PC-3 (cell line): ENCODE measurements at regions of chr18 and their contacts with region 1.

Region 1: DNA sequence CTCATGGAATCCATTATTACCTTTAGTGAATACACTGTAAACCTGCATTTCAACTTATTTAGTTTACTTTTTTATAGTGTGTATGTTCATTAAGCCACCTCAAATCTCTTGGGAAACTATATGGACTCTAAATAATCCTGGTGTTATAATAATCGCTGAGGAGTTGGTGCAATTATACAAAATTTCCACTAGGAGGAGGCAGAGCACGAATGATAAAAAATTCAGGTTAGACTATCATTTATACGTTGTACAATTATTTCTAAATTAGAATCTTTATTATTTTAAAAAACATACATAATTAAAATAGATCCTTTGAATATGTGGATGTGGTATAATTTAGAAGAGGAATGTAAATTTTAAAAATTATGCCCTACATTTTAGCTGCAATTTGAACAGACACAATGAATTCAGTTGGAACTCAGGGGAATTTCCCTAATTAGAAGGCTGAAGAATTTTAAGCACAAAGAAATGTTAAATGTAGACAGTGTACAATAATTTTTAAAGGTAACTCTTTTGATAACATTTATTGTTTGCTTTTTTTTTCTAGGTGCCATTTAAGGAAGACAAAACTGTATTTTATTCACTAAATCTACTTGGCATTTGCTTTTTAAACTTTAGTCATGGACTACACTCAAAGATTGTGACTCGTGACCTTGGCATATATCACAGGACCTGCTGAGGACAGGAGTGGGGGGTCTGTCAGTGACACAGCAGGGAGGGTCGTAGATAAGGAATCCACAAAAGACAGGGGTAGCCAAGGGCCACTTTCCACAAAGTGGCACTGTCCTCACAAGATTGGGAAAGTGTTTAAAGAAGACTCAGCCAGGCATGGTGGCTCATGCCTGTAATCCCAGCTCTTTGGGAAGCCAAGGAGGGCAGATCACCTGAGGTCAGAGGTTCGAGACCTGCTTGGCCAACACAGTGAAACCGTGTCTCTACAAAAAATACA is 45.5 kb downstream of the RAB12 start:
- DNase-seq: peak; percentile 68
- ATAC-seq: peak; percentile 70
- H3K4me3 ChIP-seq: no peak overlapping the region
- H3K27ac ChIP-seq: no peak overlapping the region
- H3K4me1 ChIP-seq: peaks cover 3% of the 10 kb centered on the region; the same call in 1 of the 2 replicates
- H3K27me3 ChIP-seq: no peaks in the 10 kb centered on the region
- CTCF ChIP-seq: peak; percentile 71

Region 2: DNA sequence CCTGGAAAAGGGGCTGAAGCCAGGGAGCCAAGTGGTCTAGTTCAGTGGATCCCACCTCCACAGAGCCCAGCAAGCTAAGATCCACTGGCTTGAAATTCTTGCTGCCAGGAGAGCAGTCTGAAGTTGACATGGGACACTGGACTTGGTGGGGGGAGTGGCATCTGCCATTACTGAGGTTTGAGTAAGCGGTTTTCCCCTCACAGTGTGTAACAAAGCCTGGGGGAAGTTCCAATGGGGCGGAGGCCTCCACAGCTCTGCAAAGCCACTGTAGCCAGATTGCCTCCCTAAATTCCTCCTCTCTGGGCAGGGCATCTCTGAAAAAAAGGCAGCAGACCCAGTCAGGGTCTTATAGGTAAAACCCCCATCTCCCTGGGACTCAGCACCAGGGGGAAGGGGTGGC is 943.3 kb before region 1 on chr18:
- CTCF ChIA-PET with region 1: no interaction called
- POLR2A ChIA-PET with region 1: no interaction called
- intact Hi-C with region 1: no loop called
- DNase-seq: no peak
- ATAC-seq: no peak
- H3K4me3 ChIP-seq: no peak overlapping the region
- H3K27ac ChIP-seq: no peak overlapping the region
- H3K4me1 ChIP-seq: no peaks in the 10 kb centered on the region
- H3K27me3 ChIP-seq: no peaks in the 10 kb centered on the region
- CTCF ChIP-seq: no peak

Region 3: GRCh38 chr18:7919570-7919969 is 735.2 kb before region 1 on chr18:
- CTCF ChIA-PET with region 1: no interaction called
- POLR2A ChIA-PET with region 1: interaction called, 11 read pairs
- intact Hi-C with region 1: no loop called
- DNase-seq: peak; percentile 51
- ATAC-seq: no peak
- H3K4me3 ChIP-seq: no peak overlapping the region
- H3K27ac ChIP-seq: peak overlapping the region; percentile 99
- H3K4me1 ChIP-seq: peaks cover 51% of the 10 kb centered on the region
- H3K27me3 ChIP-seq: no peaks in the 10 kb centered on the region
- CTCF ChIP-seq: no peak

Region 4: DNA sequence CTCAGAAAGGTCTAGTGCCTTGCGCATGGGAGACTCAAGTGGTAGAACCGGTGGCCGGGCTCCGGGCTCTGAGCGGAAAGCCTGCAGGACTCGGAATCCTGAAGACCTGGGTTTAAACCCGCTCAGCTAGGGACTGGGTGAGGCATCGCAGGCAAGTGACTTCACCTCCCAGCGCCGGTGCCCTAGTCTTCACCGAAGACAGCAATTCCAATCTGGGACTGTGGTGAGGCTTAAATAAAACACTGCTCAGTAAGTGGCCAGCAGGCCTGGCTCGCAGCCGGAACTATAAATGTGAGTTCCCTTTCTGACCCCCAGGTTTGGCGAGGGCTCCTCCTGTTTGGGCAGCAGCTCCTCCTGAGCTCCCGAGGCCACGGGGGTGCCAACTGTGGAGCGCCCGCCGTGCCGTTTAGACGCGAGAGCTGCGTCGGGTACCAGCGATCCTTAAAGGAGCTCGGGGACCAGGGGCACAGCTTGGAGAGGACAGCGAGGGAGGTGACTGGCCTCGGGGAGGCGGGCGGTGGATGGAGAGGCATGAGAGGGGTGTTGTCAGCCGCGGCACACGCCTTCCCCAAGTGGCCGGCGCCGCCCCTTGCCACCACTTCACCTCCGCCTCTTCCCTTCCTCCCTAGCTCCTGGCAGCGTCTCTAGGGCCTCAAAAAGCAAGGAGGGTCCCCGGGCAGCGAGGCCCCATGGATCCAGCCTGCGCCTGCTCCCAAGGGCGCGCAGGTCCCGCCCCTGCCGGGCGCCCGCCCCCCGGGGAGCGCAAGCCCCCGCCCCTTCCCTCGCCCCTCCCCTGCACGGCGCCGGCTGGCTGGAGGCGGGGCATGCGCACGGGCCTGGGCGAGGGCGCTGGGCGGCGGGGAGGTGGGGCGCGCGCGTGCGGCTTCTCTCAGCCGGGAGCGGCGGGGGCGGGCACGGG is 49.8 kb after region 1 on chr18:
- CTCF ChIA-PET with region 1: interaction called, 4 read pairs
- POLR2A ChIA-PET with region 1: no interaction called
- intact Hi-C with region 1: loop called (anchors 2 kb)
- DNase-seq: peak; percentile 90
- ATAC-seq: peak; percentile 68
- H3K4me3 ChIP-seq: peak overlapping the region; percentile 75
- H3K27ac ChIP-seq: peak overlapping the region; percentile 51
- H3K4me1 ChIP-seq: peaks cover 49% of the 10 kb centered on the region
- H3K27me3 ChIP-seq: no peaks in the 10 kb centered on the region
- CTCF ChIP-seq: no peak

Region 5: DNA sequence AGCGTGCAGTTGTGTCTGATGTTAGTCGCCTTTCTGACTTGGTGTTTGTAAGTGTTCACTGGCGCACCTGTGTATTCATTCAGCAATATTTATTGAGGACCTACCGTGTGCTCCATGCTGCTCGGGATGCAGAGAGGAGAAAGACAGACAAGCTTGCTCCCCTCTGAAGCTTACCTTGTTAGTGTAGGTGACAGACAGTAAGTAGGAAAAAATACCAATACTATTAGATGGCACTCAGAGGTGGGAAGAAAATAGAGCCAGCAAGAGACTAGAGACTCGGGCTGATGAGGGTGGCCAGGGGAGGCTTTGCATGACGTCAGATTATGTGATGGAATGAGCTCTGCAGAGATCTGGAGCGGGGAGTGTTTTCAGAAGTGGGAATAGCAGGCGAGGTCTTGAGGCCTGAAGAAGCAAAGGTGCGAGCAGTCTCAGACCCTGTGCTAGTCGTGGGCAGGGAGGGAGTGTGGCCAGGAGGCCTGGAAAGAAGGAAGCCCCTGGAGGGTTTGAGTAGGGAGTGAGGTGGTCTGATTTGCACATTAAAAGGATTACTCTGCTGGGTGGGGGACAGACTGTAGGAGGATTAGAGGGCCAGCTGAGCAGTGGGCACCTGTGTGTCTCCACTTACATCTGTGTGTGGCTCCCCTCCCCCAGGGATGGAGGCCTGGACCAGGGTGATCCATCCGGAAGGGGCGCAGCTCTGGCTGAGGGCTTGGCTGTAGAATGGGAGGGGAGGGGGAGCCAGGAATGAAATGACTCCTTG is 62.4 kb after region 1 on chr18:
- CTCF ChIA-PET with region 1: no interaction called
- POLR2A ChIA-PET with region 1: no interaction called
- intact Hi-C with region 1: no loop called
- DNase-seq: no peak
- ATAC-seq: no peak
- H3K4me3 ChIP-seq: no peak overlapping the region
- H3K27ac ChIP-seq: no peak overlapping the region
- H3K4me1 ChIP-seq: peaks cover 8% of the 10 kb centered on the region; the same call in 1 of the 2 replicates
- H3K27me3 ChIP-seq: no peaks in the 10 kb centered on the region
- CTCF ChIP-seq: no peak

Region 6: GRCh38 chr18:8982416-8983184 is 327.8 kb after region 1 on chr18:
- CTCF ChIA-PET with region 1: interaction called, 6 read pairs
- POLR2A ChIA-PET with region 1: no interaction called
- intact Hi-C with region 1: loop called (anchors 1 kb)
- DNase-seq: peak; percentile 86
- ATAC-seq: peak; percentile 97
- H3K4me3 ChIP-seq: no peak overlapping the region
- H3K27ac ChIP-seq: no peak overlapping the region
- H3K4me1 ChIP-seq: no peaks in the 10 kb centered on the region
- H3K27me3 ChIP-seq: no peaks in the 10 kb centered on the region
- CTCF ChIP-seq: peak; percentile 89

Region 7: DNA sequence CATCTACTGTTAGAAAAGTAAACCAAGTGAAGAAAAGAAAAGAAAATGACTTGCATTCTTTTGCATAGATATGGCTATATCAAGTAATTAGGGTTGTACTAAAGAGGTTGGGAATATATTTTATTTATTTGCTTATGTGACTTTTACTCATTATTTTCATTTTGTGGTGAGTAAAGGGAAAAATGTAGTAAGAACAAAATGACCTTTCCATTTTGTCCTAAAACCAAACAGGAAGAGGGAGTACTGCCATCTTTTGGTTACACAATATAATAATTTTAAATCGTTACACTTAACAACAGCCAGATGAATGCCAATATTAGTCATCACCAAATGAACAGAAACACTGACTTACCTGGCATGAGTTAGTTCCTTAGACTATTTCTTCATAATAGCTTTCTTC is 400.4 kb after region 1 on chr18:
- CTCF ChIA-PET with region 1: interaction called, 4 read pairs
- POLR2A ChIA-PET with region 1: no interaction called
- intact Hi-C with region 1: loop called (anchors 2 kb)
- DNase-seq: peak; percentile 90
- ATAC-seq: peak; percentile 96
- H3K4me3 ChIP-seq: no peak overlapping the region
- H3K27ac ChIP-seq: peak overlapping the region; percentile 33
- H3K4me1 ChIP-seq: peaks cover 16% of the 10 kb centered on the region
- H3K27me3 ChIP-seq: no peaks in the 10 kb centered on the region
- CTCF ChIP-seq: peak; percentile 71